ENCODE measurements at regions of chr7 and their contacts with region 1.

Region 1: DNA sequence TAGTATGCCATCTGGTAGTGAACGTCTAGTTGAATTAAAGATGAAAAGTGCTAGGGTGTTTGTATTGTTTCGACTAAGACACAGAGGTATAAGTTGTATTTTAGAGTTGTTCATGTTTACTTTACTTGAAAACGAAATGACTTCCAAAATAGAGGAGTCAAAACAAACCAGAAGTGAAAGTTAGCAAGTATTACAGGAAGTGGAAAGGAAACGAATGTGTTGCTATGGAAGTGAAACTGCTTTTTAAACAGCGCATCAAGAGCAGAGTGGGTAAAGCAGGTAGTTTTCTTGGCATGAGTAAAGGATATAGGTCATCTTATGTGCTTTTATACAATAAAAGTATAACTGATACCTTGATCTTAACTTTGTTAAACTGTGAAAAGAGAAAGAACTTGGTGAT is 20.0 kb upstream of the GALNTL5 start:
- DNase-seq: no peak
- H3K4me3 ChIP-seq: no peak overlapping the region
- H3K27ac ChIP-seq: no peak overlapping the region
- H3K4me1 ChIP-seq: no peaks in the 10 kb centered on the region
- H3K27me3 ChIP-seq: no peaks in the 10 kb centered on the region
- CTCF ChIP-seq: no peak

Region 2: GRCh38 chr7:151185762-151186631 is 750.2 kb before region 1 on chr7:
- intact Hi-C with region 1: no loop called
- DNase-seq: no peak
- H3K4me3 ChIP-seq: no peak overlapping the region
- H3K27ac ChIP-seq: no peak overlapping the region
- H3K4me1 ChIP-seq: no peaks in the 10 kb centered on the region
- H3K27me3 ChIP-seq: no peaks in the 10 kb centered on the region
- CTCF ChIP-seq: no peak

Region 3: DNA sequence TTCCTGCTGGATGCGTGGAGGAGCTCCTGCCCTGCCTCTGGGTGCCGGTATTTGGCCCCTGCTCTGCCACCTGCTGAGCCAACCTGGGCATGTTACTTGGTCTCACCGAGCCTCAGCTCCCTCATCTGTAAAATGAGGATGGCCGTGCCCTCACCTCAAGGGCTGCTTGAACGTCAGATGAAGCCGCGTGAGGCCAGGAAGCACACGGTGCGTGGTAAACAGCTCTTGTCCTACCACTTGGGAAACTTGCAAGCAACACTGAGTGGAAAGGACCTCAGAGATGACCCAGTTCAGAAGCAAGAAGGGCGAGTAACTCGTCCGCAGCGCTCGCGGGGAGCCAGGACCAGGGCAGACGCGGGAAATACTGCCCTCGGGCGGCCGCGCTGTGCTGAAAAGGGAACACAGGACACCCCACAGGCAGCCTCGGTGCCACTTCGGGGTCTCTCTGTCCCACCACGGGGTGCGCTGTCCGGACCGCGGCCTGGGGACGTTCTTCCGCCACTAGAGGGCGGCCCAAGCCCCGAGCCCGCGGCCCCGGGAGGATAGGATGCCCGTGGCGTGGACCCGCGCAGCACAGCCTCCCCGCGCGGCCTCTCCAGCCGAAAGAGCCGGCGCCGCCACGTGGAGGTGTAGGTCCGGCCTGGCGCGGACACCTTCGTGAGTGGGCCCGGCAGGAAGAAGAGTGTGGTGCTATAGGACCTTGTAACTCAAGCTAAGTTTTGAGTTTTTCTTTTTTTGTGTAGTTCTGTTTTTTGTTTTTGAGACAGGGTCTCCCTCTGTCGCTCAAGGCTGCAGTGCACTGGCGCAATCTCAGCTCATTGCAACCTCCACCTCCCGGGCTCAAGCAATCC is 153.4 kb before region 1 on chr7:
- intact Hi-C with region 1: loop called (anchors 5 kb)
- DNase-seq: peak; percentile 62
- H3K4me3 ChIP-seq: peak overlapping the region; percentile 2
- H3K27ac ChIP-seq: no peak overlapping the region
- H3K4me1 ChIP-seq: no peaks in the 10 kb centered on the region
- H3K27me3 ChIP-seq: no peaks in the 10 kb centered on the region
- CTCF ChIP-seq: peak; percentile 82

Region 4: GRCh38 chr7:151863386-151864079 is 72.7 kb before region 1 on chr7:
- intact Hi-C with region 1: loop called (anchors 5 kb)
- DNase-seq: no peak
- H3K4me3 ChIP-seq: no peak overlapping the region
- H3K27ac ChIP-seq: no peak overlapping the region
- H3K4me1 ChIP-seq: no peaks in the 10 kb centered on the region
- H3K27me3 ChIP-seq: no peaks in the 10 kb centered on the region
- CTCF ChIP-seq: no peak

Region 5: DNA sequence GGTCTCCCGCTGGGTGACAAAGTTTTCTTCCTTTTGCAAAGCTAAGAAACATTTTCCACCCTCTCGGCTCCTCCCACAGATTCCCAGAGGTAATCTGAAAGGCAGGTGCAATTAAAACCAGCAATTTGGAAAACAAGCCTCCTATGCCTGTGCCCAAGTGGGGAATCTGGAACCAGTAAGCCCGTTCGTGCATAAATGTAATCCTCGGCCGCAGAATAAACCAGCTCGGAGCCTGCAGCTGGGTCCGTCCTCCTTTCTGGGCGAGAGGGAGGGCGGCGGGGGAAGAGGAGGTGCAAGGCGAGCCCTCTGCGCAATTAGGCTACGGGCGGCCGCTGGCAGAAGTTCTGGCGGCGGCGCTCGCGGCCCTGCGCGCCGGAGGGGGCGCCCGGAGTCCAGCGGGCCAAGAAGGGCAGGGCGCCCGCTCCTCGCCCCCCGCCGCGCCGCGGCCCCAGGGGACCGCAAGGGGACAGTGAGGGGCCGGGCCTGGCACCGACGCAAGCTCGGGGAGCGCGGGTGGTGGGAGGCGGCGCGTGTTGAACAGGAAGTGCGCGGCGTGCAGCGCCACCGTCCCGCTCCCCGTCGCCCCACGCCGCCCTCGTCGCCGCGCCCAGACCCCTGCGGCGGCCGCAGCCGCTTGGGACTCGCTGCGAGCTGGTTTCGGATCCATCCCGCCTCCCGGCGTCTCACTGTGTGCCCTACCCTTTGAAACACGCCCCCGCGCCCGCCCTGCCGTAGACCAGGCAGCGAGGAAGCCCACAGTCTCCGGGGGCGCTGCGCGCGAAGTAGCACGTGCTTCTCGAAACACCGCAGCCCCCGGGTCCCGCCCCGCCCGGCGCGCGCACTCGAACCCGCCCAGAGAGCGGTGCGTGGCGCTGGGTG is 59.1 kb before region 1 on chr7 and contains the start of gene PRKAG2:
- intact Hi-C with region 1: loop called (anchors 5 kb)
- DNase-seq: peak; percentile 77
- H3K4me3 ChIP-seq: peak within 1 kb of the TSS; percentile 71
- H3K27ac ChIP-seq: peak within 1 kb of the TSS; percentile 83
- H3K4me1 ChIP-seq: peaks cover 7% of the 10 kb centered on the region
- H3K27me3 ChIP-seq: no peaks in the 10 kb centered on the region
- CTCF ChIP-seq: no peak
- total RNA-seq, gene PRKAG2: 36.3 to 42.0 TPM

Region 6: GRCh38 chr7:151904270-151904669 is 31.9 kb before region 1 on chr7:
- intact Hi-C with region 1: no loop called
- DNase-seq: no peak
- H3K4me3 ChIP-seq: no peak overlapping the region
- H3K27ac ChIP-seq: no peak overlapping the region
- H3K4me1 ChIP-seq: no peaks in the 10 kb centered on the region
- H3K27me3 ChIP-seq: no peaks in the 10 kb centered on the region
- CTCF ChIP-seq: no peak

Region 7: GRCh38 chr7:152050547-152050971 is 114.4 kb after region 1 on chr7:
- intact Hi-C with region 1: no loop called
- DNase-seq: no peak
- H3K4me3 ChIP-seq: no peak overlapping the region
- H3K27ac ChIP-seq: no peak overlapping the region
- H3K4me1 ChIP-seq: no peaks in the 10 kb centered on the region
- H3K27me3 ChIP-seq: no peaks in the 10 kb centered on the region
- CTCF ChIP-seq: no peak

Measured in colonic mucosa (tissue), 4 donors.